Aorta (tissue), 5 donors: ENCODE measurements at regions of chr7 and their contacts with region 1.

Region 1: GRCh38 chr7:100469227-100470044 is 5.4 kb upstream of the SPACDR start:
- DNase-seq: peak; percentile 91 to 97
- ATAC-seq: peak; percentile 91
- H3K4me3 ChIP-seq: no peak overlapping the region
- H3K27ac ChIP-seq: no peak overlapping the region
- H3K4me1 ChIP-seq: no peaks in the 10 kb centered on the region
- H3K27me3 ChIP-seq: no peaks in the 10 kb centered on the region

Region 2: DNA sequence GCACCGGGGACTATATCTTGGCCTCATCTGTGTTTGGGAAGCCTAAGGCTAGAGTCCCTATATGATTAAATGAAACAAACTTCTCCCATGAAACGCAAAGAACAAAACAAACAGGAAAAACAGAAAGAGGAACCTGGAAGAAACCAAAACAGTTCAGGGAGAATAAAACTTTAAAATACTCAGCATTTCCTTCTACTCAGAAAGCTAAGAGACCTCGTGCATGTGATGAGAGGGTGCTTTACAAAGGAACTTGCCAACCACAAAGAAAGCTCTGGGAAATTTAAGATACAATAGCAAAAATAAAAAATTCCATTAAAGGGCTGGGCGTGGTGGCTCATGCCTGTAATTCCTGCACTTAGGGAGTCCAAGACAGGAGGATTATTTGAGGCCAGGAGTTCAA is 89.2 kb before region 1 on chr7:
- intact Hi-C with region 1: no loop called
- DNase-seq: no peak
- ATAC-seq: no peak
- H3K4me3 ChIP-seq: no peak overlapping the region
- H3K27ac ChIP-seq: no peak overlapping the region
- H3K4me1 ChIP-seq: no peaks in the 10 kb centered on the region
- H3K27me3 ChIP-seq: no peaks in the 10 kb centered on the region

Region 3: DNA sequence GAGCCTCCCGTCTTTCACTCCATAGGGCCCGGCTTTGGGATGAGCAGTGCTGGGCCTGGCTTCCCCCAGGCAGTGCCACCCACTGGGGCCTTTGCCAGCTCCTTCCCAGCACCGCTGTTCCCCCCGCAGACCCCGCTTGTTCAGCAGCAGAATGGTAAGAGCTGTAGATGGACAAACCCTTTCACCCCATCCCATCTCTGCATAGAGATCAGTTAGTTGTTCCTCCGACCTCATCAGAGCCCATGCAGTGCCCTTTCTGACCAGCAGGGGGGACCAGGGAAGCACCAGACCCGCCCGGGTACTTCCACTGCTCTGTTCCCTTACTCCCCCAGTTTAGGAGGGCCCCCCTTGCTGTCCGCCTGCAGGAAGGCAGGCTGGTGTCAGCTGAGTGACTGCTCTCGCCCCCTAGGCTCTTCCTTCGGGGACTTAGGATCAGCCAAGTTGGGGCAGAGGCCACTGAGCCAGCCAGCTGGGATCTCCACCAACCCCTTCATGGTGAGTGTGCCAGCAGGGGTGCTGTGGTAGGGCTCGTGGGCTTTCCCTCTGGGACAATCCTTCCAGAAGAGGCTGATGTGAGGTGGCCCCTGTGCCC is 94.5 kb after region 1 on chr7:
- intact Hi-C with region 1: loop called (anchors 2 kb)
- DNase-seq: peak; percentile 88 to 95
- ATAC-seq: peak; percentile 79
- H3K4me3 ChIP-seq: no peak overlapping the region
- H3K27ac ChIP-seq: no peak overlapping the region
- H3K4me1 ChIP-seq: no peaks in the 10 kb centered on the region
- H3K27me3 ChIP-seq: no peaks in the 10 kb centered on the region

Region 4: GRCh38 chr7:100719523-100720319 is 250.3 kb after region 1 on chr7:
- intact Hi-C with region 1: loop called in 1 of 2 experiments (anchors 10 kb)
- DNase-seq: no peak
- ATAC-seq: no peak
- H3K4me3 ChIP-seq: no peak overlapping the region
- H3K27ac ChIP-seq: no peak overlapping the region
- H3K4me1 ChIP-seq: no peaks in the 10 kb centered on the region
- H3K27me3 ChIP-seq: no peaks in the 10 kb centered on the region